Left ventricle myocardium superior (tissue), 1 donor: ENCODE measurements at regions of chr12 and their contacts with region 1.

Region 1: DNA sequence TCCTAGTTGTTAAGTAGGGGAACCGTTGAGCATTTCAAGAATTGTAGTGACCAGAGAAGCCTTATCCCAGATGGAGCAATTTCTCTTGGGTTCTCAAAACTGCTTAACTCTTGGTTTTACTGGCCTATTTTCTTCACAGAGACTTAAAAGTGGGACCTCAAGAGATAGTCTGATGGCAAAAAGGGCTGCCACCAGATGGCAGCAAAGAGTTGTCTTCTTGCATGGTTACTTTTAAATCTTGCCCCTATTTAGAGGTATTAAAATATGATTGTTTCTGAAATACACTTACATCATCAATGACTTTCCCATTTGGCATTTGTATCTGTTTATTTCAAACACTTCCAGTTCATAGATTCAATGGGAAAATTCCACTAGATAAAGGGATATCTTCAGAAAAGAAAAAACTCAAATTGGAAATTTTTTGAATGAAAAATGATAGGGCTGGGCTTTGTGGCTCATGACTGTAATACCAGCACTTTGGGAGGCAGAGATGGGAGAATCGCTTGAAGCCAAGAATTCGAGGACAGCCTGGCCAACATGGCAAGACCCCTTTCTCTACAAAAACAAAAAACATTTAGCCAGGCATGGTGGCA is 69.9 kb upstream of the CNTN1 start:
- DNase-seq: peak; percentile 43
- ATAC-seq: no peak

Region 2: DNA sequence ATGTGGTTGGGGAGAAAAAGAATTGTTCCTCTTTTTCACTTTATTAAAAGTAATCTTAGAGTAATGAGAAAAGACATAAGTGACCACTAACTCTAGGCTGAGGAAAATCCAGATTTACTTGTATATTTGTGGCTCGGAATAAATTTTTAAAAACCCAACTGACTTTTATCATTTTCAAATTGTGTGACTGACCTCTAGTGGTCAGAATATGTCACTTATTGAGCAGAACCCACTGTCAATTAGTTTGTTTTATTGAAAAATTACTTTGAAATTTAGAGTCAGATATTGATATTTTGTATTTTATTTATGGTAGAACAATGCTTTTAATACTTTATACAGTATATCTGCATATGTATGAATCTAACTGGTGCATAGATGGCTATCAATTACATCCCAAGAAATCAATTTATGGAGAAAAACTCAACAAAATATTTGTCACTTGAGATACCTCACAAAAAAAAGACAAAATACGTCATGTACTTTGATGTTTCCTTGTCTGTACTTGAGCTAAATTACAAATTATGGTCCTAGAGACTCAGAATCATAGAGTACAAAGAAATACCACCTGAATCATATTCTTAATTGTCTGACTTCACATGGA is 299.3 kb after region 1 on chr12:
- intact Hi-C with region 1: loop called (anchors 10 kb)
- DNase-seq: no peak
- ATAC-seq: no peak